ENCODE measurements at regions of chr2 and their contacts with region 1.

Region 1: GRCh38 chr2:46062637-46063412 is 234.4 kb upstream of the EPAS1 start:
- DNase-seq: peak; percentile 92
- ATAC-seq: peak; percentile 73
- H3K4me3 ChIP-seq: no peak overlapping the region
- H3K27ac ChIP-seq: no peak overlapping the region
- H3K4me1 ChIP-seq: peaks cover 19% of the 10 kb centered on the region; the same call in 1 of the 2 replicates
- H3K27me3 ChIP-seq: no peaks in the 10 kb centered on the region
- CTCF ChIP-seq: peak; percentile 92

Region 2: DNA sequence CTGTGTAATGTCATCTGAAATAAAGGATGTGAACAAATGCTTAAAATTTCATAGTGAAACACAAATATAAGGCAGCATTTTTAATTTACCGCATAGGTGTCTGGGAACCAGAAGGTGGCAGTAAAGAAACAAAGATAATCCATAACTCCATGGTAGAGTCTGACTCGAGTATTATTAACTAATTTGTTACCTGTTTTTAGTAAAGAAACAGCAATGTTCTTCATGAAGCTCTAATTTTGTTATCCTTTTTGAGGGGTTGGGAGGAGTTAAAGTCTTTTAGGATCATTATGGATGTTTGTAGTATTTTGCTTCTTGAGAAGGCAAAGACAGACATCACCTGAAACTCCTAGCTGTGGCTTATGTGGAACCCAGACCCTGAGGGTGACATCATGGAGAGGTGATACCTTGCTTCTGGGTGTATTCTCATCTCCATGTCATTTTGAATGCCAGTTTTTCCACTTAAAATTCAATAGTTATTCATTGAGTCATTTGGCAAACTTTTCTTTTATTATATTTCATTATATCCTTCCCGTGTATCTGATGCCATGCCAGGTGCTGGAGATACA is 51.8 kb before region 1 on chr2:
- CTCF ChIA-PET with region 1: interaction called, 6 read pairs
- POLR2A ChIA-PET with region 1: no interaction called
- intact Hi-C with region 1: loop called (anchors 5 kb)
- DNase-seq: peak; percentile 72
- ATAC-seq: peak; percentile 75
- H3K4me3 ChIP-seq: no peak overlapping the region
- H3K27ac ChIP-seq: peak overlapping the region; percentile 44
- H3K4me1 ChIP-seq: peaks cover 27% of the 10 kb centered on the region
- H3K27me3 ChIP-seq: no peaks in the 10 kb centered on the region
- CTCF ChIP-seq: peak; percentile 94

Region 3: GRCh38 chr2:46164581-46165301 is 101.9 kb after region 1 on chr2:
- CTCF ChIA-PET with region 1: no interaction called
- POLR2A ChIA-PET with region 1: no interaction called
- intact Hi-C with region 1: loop called (anchors 2 kb)
- DNase-seq: peak; percentile 99
- ATAC-seq: peak; percentile 66
- H3K4me3 ChIP-seq: peak overlapping the region; percentile 41; the same call in 1 of the 2 replicates
- H3K27ac ChIP-seq: peak overlapping the region; percentile 95
- H3K4me1 ChIP-seq: peaks cover 35% of the 10 kb centered on the region
- H3K27me3 ChIP-seq: no peaks in the 10 kb centered on the region
- CTCF ChIP-seq: no peak

Region 4: DNA sequence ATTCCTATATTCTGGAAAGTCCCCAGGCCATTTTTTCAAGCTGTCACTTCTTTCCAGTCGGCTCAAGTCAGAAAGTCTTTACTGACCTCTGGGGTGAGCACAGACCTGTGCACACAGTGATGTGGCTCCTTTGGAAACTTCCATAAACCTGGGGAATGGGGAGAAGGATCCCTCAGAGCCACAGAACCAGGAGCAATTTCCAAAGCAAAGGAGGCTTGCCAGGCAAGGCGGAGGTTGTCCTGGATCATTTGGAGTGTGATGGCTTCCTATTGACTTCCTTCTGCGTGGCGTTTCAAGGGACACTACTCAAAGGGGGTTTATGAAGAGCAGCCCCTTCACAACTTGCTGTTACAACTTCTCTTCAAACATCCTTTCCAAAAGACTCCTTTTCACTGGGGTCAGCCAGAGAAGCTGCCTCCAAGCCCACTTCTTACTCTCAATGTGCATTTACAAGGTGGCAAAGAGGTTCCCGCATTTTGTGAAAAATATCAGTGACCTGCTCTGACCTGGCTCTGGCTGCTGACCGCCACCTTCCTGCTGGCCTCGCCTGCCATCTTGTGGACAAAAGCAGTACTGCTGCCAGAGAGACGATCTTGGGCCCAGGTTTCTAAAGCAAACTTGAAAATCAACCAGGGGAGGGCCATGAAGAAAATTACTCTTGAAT is 398.3 kb after region 1 on chr2:
- CTCF ChIA-PET with region 1: no interaction called
- POLR2A ChIA-PET with region 1: no interaction called
- intact Hi-C with region 1: loop called (anchors 1 kb)
- DNase-seq: peak; percentile 82
- ATAC-seq: peak; percentile 62
- H3K4me3 ChIP-seq: no peak overlapping the region
- H3K27ac ChIP-seq: no peak overlapping the region
- H3K4me1 ChIP-seq: peaks cover 11% of the 10 kb centered on the region
- H3K27me3 ChIP-seq: no peaks in the 10 kb centered on the region
- CTCF ChIP-seq: peak; percentile 99

Measured in PC-3 (cell line).